ENCODE measurements at regions of chr10 and their contacts with region 1.

Region 1: GRCh38 chr10:115417585-115418265 is 324.6 kb downstream of the ATRNL1 start:
- DNase-seq: peak; percentile 18 to 47 (median 36)
- H3K4me3 ChIP-seq: no peak overlapping the region
- H3K27ac ChIP-seq: no peak overlapping the region
- H3K4me1 ChIP-seq: no peaks in the 10 kb centered on the region
- H3K27me3 ChIP-seq: peaks cover 0 to 2% (median 0%) of the 10 kb centered on the region in 5 experiments

Region 2: DNA sequence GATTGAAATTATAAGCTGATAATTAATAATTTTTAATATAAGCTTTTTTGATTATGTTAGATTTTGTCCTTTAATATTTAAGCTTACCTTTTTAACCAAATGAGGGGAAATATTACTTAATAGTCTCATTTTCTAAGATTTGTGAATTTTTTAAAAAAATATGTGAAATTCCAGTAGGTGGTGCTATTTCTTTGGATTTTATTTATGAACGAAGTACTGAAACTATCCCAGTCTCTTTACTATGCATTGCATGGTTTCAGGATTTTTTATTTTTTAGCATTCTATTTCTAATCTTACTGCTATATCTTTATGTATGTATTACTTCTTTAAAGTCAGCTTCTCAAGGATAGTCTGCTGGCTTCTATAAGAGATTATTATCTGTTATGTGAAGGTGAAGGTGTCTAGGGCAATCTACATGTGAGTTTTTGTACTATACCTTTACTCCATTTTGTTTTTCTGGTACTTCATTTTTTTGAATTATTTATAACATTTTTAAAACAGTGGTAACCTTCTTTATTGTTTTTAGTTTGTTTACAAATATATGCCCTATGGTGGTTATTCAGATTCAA is 246.2 kb before region 1 on chr10:
- CTCF ChIA-PET with region 1: interaction called, 10 read pairs
- POLR2A ChIA-PET with region 1: no interaction called
- DNase-seq: peak; percentile 7 to 30 (median 16)
- H3K4me3 ChIP-seq: no peak overlapping the region
- H3K27ac ChIP-seq: no peak overlapping the region
- H3K4me1 ChIP-seq: no peaks in the 10 kb centered on the region
- H3K27me3 ChIP-seq: no peaks in the 10 kb centered on the region

Region 3: GRCh38 chr10:115720121-115720520 is 302.4 kb after region 1 on chr10:
- CTCF ChIA-PET with region 1: no interaction called
- POLR2A ChIA-PET with region 1: no interaction called
- DNase-seq: no peak
- H3K4me3 ChIP-seq: no peak overlapping the region
- H3K27ac ChIP-seq: no peak overlapping the region
- H3K4me1 ChIP-seq: no peaks in the 10 kb centered on the region
- H3K27me3 ChIP-seq: peaks cover 0 to 3% (median 0%) of the 10 kb centered on the region in 5 experiments

Measured in common myeloid progenitor, CD34-positive (primary cell).